ENCODE measurements at regions of chr12 and their contacts with region 1.

Region 1: DNA sequence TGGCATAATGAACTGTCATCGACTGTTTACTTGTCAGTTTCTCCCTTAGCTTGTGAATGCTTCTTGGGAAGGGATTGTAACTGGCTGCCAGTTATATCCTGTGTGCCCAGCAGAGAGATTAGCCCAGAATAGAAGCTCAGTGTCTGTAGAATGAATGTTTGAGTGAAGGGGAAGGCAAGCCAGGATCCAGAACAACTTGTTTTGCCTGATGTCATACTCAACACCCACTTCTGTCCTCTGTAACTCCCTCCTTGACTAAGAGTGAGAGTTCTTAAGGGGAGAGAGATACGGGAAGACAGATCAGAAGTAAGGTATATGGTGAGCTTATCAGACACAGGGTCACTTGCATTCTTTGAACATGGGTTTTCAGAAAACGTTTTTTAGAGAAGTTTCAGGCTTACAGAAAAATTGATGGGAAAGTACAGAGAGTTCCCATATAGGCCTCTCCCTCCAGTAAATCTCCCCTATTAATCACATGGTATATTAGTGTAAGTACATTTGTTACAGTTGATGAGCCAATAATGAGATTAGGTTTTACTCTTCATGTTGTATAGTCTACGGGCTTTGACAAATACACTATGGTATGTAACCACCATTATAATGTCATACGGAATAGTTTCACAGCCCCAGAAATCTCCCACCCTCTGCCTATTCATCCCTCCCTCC is 5.6 kb upstream of the SPPL3 start:
- DNase-seq: no peak
- ATAC-seq: no peak
- H3K4me3 ChIP-seq: no peak overlapping the region
- H3K27ac ChIP-seq: no peak overlapping the region
- H3K4me1 ChIP-seq: peaks cover 33% of the 10 kb centered on the region
- H3K27me3 ChIP-seq: peaks cover 0 to 4% of the 10 kb centered on the region in 2 experiments; a peak in 2 of 5 replicates
- CTCF ChIP-seq: no peak
- EP300 ChIP-seq: no peak
- POLR2A ChIP-seq: no peak
- RAD21 ChIP-seq: no peak

Region 2: GRCh38 chr12:120944645-120945231 is 35.0 kb after region 1 on chr12:
- CTCF ChIA-PET with region 1: no interaction called
- POLR2A ChIA-PET with region 1: interaction called, 4 read pairs
- in situ Hi-C with region 1: no loop called
- intact Hi-C with region 1: loop called (anchors 5 kb)
- DNase-seq: no peak
- ATAC-seq: peak; percentile 70
- H3K4me3 ChIP-seq: peak overlapping the region in 2 of 3 experiments; percentile 13 to 33; a peak in 2 of 6 replicates
- H3K27ac ChIP-seq: no peak overlapping the region
- H3K4me1 ChIP-seq: peaks cover 51% of the 10 kb centered on the region
- H3K27me3 ChIP-seq: no peaks in the 10 kb centered on the region
- CTCF ChIP-seq: peak; percentile 68
- EP300 ChIP-seq: no peak
- POLR2A ChIP-seq: no peak
- RAD21 ChIP-seq: peak; percentile 46; the same call in 1 of the 2 replicates

Region 3: GRCh38 chr12:120988658-120989057 is 78.9 kb after region 1 on chr12:
- CTCF ChIA-PET with region 1: no interaction called
- POLR2A ChIA-PET with region 1: no interaction called
- in situ Hi-C with region 1: no loop called
- intact Hi-C with region 1: no loop called
- DNase-seq: no peak
- ATAC-seq: peak; percentile 33; the same call in 2 of the 3 replicates
- H3K4me3 ChIP-seq: no peak overlapping the region
- H3K27ac ChIP-seq: no peak overlapping the region
- H3K4me1 ChIP-seq: peaks cover 25% of the 10 kb centered on the region
- H3K27me3 ChIP-seq: no peaks in the 10 kb centered on the region
- CTCF ChIP-seq: no peak
- EP300 ChIP-seq: no peak
- POLR2A ChIP-seq: no peak; a peak in 1 of 4 replicates
- RAD21 ChIP-seq: no peak

Measured in HepG2 (cell line).